ENCODE measurements at regions of chr5 and their contacts with region 1.

Region 1: GRCh38 chr5:132829742-132830435 is 558 bp downstream of the SHROOM1 start:
- DNase-seq: peak; percentile 88
- ATAC-seq: peak; percentile 96

Region 2: GRCh38 chr5:132883261-132883834 is 53.5 kb after region 1 on chr5:
- intact Hi-C with region 1: loop called (anchors 5 kb)
- DNase-seq: no peak
- ATAC-seq: peak; percentile 88